Caco-2 (cell line): ENCODE measurements at regions of chr20 and their contacts with region 1.

Region 1: GRCh38 chr20:46894971-46895905 is 595 bp downstream of the EYA2 start:
- DNase-seq: peak; percentile 15 to 46
- H3K4me3 ChIP-seq: 0 out of 2 replicates have a peak overlapping the region, but pooled peaks have one; percentile 8
- H3K4me3 Mint-ChIP-seq: peak overlapping the region; percentile 37
- H3K27ac Mint-ChIP-seq: no peak overlapping the region
- H3K4me1 ChIP-seq: peaks cover 4% of the 10 kb centered on the region; the same call in 1 of the 2 replicates
- H3K4me1 Mint-ChIP-seq: no peaks in the 10 kb centered on the region
- H3K27me3 ChIP-seq: peaks cover 15% of the 10 kb centered on the region
- H3K27me3 Mint-ChIP-seq: peaks cover 67% of the 10 kb centered on the region
- CTCF ChIP-seq: no peak

Region 2: GRCh38 chr20:46767127-46767761 is 128.0 kb before region 1 on chr20:
- CTCF ChIA-PET with region 1: no interaction called
- POLR2A ChIA-PET with region 1: no interaction called
- intact Hi-C with region 1: loop called (anchors 10 kb)
- DNase-seq: peak in 1 of 2 experiments; percentile 74
- H3K4me3 ChIP-seq: no peak overlapping the region
- H3K4me3 Mint-ChIP-seq: no peak overlapping the region
- H3K27ac Mint-ChIP-seq: no peak overlapping the region
- H3K4me1 ChIP-seq: no peaks in the 10 kb centered on the region
- H3K4me1 Mint-ChIP-seq: no peaks in the 10 kb centered on the region
- H3K27me3 ChIP-seq: no peaks in the 10 kb centered on the region
- H3K27me3 Mint-ChIP-seq: peaks cover 13% of the 10 kb centered on the region
- CTCF ChIP-seq: peak; percentile 89 to 93

Region 3: GRCh38 chr20:46872328-46873211 is 22.7 kb before region 1 on chr20:
- CTCF ChIA-PET with region 1: no interaction called
- POLR2A ChIA-PET with region 1: interaction called, 14 read pairs
- intact Hi-C with region 1: no loop called
- DNase-seq: no peak
- H3K4me3 ChIP-seq: no peak overlapping the region
- H3K4me3 Mint-ChIP-seq: no peak overlapping the region
- H3K27ac Mint-ChIP-seq: no peak overlapping the region
- H3K4me1 ChIP-seq: no peaks in the 10 kb centered on the region
- H3K4me1 Mint-ChIP-seq: no peaks in the 10 kb centered on the region
- H3K27me3 ChIP-seq: 0 out of 2 replicates have a peak, but pooled peaks cover 2% of the 10 kb centered on the region
- H3K27me3 Mint-ChIP-seq: peaks cover 10% of the 10 kb centered on the region
- CTCF ChIP-seq: no peak

Region 4: GRCh38 chr20:46978951-46979491 is 83.8 kb after region 1 on chr20:
- CTCF ChIA-PET with region 1: no interaction called
- POLR2A ChIA-PET with region 1: no interaction called
- intact Hi-C with region 1: no loop called
- DNase-seq: no peak
- H3K4me3 ChIP-seq: no peak overlapping the region
- H3K4me3 Mint-ChIP-seq: no peak overlapping the region
- H3K27ac Mint-ChIP-seq: no peak overlapping the region
- H3K4me1 ChIP-seq: no peaks in the 10 kb centered on the region
- H3K4me1 Mint-ChIP-seq: no peaks in the 10 kb centered on the region
- H3K27me3 ChIP-seq: no peaks in the 10 kb centered on the region
- H3K27me3 Mint-ChIP-seq: peaks cover 17% of the 10 kb centered on the region
- CTCF ChIP-seq: no peak